Activated CD4-positive, alpha-beta memory T cell treated with anti-CD3 and anti-CD28 coated beads for 36 hours (primary cell): ENCODE measurements at regions of chr10 and their contacts with region 1.

Region 1: GRCh38 chr10:69087590-69088470 is at the start of gene SRGN:
- DNase-seq: peak; percentile 87
- H3K4me3 Mint-ChIP-seq: peak within 1 kb of the TSS; percentile 94
- H3K27ac Mint-ChIP-seq: peak within 1 kb of the TSS; percentile 96
- H3K4me1 Mint-ChIP-seq: peaks cover 41% of the 10 kb centered on the region
- H3K27me3 Mint-ChIP-seq: no peaks in the 10 kb centered on the region
- total RNA-seq, gene SRGN: 949 to 966 TPM

Region 2: DNA sequence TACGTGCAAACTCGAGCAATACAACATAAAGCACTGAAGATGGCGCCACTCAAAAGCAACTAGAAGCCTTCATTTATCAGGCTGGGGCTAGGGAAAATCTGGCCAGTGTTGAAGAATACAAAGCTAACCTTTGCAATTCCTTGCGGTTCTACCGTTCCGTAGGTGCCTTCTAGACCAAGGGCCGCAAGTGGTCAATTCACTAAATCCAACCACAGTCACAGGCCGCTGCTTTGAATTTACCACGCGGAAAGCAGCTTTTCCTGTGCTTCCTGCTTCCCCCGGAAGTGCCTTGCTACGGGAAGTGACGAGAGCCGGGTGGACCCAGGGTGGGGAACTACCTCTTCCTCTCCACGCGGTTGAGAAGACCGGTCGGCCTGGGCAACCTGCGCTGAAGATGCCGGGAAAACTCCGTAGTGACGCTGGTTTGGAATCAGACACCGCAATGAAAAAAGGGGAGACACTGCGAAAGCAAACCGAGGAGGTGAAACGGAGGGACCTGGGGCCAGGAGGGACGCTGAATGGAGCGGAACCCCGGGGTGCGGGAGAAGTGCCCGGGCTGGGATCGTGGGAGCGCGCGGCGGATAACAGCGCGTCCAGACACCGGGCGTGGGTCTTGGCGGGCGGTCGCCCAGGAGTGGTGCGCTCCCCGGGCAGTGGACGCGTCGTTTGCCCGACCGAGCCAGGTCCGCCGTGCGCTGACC is 131.8 kb before region 1 on chr10 and contains the start of gene DDX21:
- CTCF ChIA-PET with region 1: interaction called, 15 read pairs
- POLR2A ChIA-PET with region 1: interaction called, 12 read pairs
- intact Hi-C with region 1: loop called (anchors 1 kb)
- DNase-seq: peak; percentile 94
- H3K4me3 Mint-ChIP-seq: peak within 1 kb of the TSS; percentile 97
- H3K27ac Mint-ChIP-seq: peak within 1 kb of the TSS; percentile 99
- H3K4me1 Mint-ChIP-seq: peaks cover 39% of the 10 kb centered on the region
- H3K27me3 Mint-ChIP-seq: no peaks in the 10 kb centered on the region
- total RNA-seq, gene DDX21: 156 to 158 TPM

Region 3: GRCh38 chr10:69004821-69005220 is 83.0 kb before region 1 on chr10:
- CTCF ChIA-PET with region 1: interaction called, 159 read pairs
- POLR2A ChIA-PET with region 1: interaction called, 7 read pairs
- intact Hi-C with region 1: loop called (anchors 1 kb)
- DNase-seq: no peak
- H3K4me3 Mint-ChIP-seq: no peak overlapping the region
- H3K27ac Mint-ChIP-seq: no peak overlapping the region
- H3K4me1 Mint-ChIP-seq: peaks cover 15% of the 10 kb centered on the region
- H3K27me3 Mint-ChIP-seq: no peaks in the 10 kb centered on the region

Region 4: GRCh38 chr10:69045441-69046300 is 42.2 kb before region 1 on chr10:
- CTCF ChIA-PET with region 1: interaction called, 62 read pairs
- POLR2A ChIA-PET with region 1: interaction called, 178 read pairs
- intact Hi-C with region 1: loop called (anchors 1 kb)
- DNase-seq: peak; percentile 68
- H3K4me3 Mint-ChIP-seq: peak overlapping the region; percentile 71
- H3K27ac Mint-ChIP-seq: peak overlapping the region; percentile 97
- H3K4me1 Mint-ChIP-seq: peaks cover 64% of the 10 kb centered on the region
- H3K27me3 Mint-ChIP-seq: no peaks in the 10 kb centered on the region

Region 5: DNA sequence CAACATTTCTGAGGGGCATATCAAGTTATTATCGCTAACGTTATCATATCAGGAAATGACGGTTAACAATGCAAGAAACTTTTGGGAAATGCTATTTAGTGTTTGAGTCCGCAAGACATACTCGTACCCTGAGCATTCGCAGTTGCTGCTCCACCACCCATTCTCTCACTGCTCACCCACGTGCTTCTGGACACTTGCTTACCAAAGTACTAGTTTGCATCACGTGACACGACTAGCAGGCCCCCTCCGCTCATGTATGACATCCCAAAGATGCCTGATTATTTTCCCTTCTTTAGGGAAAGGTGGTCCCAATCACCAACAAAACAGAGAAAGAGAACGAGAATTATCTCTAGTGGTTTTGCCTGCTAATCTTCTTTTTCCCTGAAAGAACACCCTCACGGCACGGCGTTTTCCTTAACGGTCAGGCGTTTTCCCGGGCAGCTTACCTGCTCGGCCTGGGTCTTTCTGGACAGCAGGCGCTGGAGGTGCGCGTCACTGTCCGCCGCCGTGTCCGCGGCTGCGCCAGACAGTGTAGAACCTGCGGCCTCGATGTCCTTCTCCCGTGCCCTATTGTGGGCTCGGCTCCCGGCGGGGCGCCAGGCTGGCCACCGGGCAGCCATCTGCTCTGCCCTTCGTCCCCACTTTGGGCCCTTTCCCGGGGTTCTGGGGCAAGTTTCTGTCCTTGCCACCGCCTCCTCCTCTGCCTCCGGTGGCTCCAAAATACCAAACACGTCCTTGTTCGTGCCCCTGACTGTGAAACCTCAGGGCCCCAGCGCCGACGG is 92.1 kb after region 1 on chr10 and contains the start of gene SUPV3L1:
- CTCF ChIA-PET with region 1: no interaction called
- POLR2A ChIA-PET with region 1: interaction called, 4 read pairs
- intact Hi-C with region 1: loop called (anchors 1 kb)
- DNase-seq: peak; percentile 91
- H3K4me3 Mint-ChIP-seq: peak within 1 kb of the TSS; percentile 87
- H3K27ac Mint-ChIP-seq: peak within 1 kb of the TSS; percentile 100
- H3K4me1 Mint-ChIP-seq: peaks cover 45% of the 10 kb centered on the region
- H3K27me3 Mint-ChIP-seq: no peaks in the 10 kb centered on the region
- total RNA-seq, gene SUPV3L1: 45.0 to 47.6 TPM